Breast epithelium (tissue), 4 donors: ENCODE measurements at regions of chr9 and their contacts with region 1.

Region 1: DNA sequence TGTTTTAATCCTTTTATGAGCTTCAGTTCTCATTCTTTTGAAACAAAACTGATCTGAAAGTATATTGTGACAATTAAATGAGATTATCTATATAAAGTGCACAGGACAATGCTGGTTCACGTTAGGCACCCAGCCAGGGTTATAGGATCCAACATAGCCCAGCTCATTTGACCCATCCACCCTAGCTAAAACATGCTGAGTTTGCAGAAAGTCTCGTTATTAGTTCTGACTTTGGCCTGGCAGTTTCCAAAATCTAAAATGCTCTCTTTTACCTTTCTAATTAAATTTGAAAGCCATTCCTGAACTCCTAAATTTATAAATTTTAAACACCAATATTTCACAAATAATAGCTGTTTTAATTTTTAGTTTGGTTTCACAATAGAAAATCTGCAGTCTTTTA is 131.9 kb upstream of the PTPRD start:
- DNase-seq: no peak
- H3K4me3 ChIP-seq: no peak overlapping the region
- H3K27ac ChIP-seq: no peak overlapping the region
- H3K4me1 ChIP-seq: no peaks in the 10 kb centered on the region
- H3K27me3 ChIP-seq: no peaks in the 10 kb centered on the region
- CTCF ChIP-seq: no peak
- POLR2A ChIP-seq: no peak

Region 2: GRCh38 chr9:10571699-10572098 is 173.0 kb before region 1 on chr9:
- intact Hi-C with region 1: no loop called
- DNase-seq: no peak
- H3K4me3 ChIP-seq: no peak overlapping the region
- H3K27ac ChIP-seq: no peak overlapping the region
- H3K4me1 ChIP-seq: no peaks in the 10 kb centered on the region
- H3K27me3 ChIP-seq: no peaks in the 10 kb centered on the region
- CTCF ChIP-seq: no peak
- POLR2A ChIP-seq: no peak

Region 3: GRCh38 chr9:10764481-10764880 is 19.8 kb after region 1 on chr9:
- intact Hi-C with region 1: loop called (anchors 2 kb)
- DNase-seq: no peak
- H3K4me3 ChIP-seq: no peak overlapping the region
- H3K27ac ChIP-seq: no peak overlapping the region
- H3K4me1 ChIP-seq: no peaks in the 10 kb centered on the region
- H3K27me3 ChIP-seq: no peaks in the 10 kb centered on the region
- CTCF ChIP-seq: no peak
- POLR2A ChIP-seq: no peak

Region 4: GRCh38 chr9:11194246-11194645 is 449.6 kb after region 1 on chr9:
- intact Hi-C with region 1: loop called (anchors 5 kb)
- DNase-seq: no peak
- H3K4me3 ChIP-seq: no peak overlapping the region
- H3K27ac ChIP-seq: no peak overlapping the region
- H3K4me1 ChIP-seq: no peaks in the 10 kb centered on the region
- H3K27me3 ChIP-seq: no peaks in the 10 kb centered on the region
- CTCF ChIP-seq: no peak
- POLR2A ChIP-seq: no peak